AG04450 (cell line): ENCODE measurements at regions of chr20 and their contacts with region 1.

Region 1: GRCh38 chr20:3651204-3651962 is 11.8 kb downstream of the GFRA4 start:
- DNase-seq: no peak
- H3K4me3 ChIP-seq: no peak overlapping the region
- H3K27ac ChIP-seq: no peak overlapping the region
- H3K27me3 ChIP-seq: peaks cover 7% of the 10 kb centered on the region
- CTCF ChIP-seq: no peak

Region 2: GRCh38 chr20:2809690-2810089 is 841.7 kb before region 1 on chr20:
- CTCF ChIA-PET with region 1: no interaction called
- POLR2A ChIA-PET with region 1: interaction called, 10 read pairs
- DNase-seq: no peak
- H3K4me3 ChIP-seq: no peak overlapping the region
- H3K27ac ChIP-seq: no peak overlapping the region
- H3K27me3 ChIP-seq: peaks cover 19% of the 10 kb centered on the region
- CTCF ChIP-seq: no peak

Region 3: DNA sequence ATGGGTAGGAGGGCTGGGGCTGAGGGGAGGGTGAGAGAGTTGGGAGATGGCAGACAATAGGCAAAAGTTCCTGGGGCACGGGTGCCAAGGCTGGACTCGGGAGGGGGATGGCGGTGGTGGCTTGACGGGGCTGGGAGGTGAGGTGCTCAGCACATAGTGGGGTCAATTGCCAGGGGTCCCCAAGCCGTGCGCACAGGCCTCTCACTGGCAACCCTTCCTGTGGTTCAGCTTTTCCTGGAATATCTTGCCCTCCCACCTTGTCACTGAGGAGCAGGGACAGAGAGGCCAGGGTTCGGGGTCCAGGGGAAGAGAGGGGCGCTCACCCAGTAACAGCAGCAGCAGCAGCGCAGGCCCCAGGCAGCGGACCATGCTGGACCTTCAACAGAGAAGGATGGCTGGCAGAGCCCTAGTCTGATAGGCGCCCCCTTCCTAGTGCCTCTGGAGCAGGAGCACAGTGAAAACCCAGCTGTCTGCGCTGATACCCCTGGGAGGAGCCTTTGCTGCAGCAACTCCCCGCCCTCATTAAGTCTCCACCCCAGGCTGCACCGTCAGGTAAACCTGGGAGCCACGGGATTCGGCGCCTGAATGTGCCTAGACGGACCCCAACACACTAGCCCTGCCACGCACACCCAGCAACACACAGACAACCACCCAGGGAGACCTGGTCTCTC is 11.8 kb after region 1 on chr20 and contains the start of gene GFRA4:
- CTCF ChIA-PET with region 1: no interaction called
- POLR2A ChIA-PET with region 1: no interaction called
- DNase-seq: no peak
- H3K4me3 ChIP-seq: no peak within 1 kb of the TSS
- H3K27ac ChIP-seq: no peak within 1 kb of the TSS
- H3K27me3 ChIP-seq: peaks cover 40% of the 10 kb centered on the region
- CTCF ChIP-seq: no peak
- polyA plus RNA-seq, gene GFRA4: not detected in 2 replicates